ENCODE measurements at regions of chr13 and their contacts with region 1.

Region 1: DNA sequence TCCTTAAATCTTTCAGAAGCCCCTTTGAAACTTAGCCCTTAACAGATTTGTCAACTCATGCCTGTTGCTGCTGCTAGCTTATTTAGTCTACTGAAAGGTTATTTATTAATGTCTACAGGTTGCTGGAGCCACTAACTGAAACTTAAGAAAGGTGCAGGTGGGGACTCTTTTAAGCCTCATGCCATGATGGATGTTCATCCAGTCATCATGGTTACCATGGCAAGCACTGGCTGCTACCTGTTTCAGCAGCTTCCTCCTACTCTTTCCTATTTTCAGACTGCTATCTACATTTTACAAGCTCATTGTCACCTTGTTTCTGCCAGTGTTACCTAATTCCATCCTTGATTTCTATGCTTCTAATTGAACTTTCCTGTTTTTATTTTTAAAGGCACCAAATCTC is 27.1 kb downstream of the DGKH start:
- DNase-seq: no peak
- H3K4me3 Mint-ChIP-seq: no peak overlapping the region
- H3K27ac Mint-ChIP-seq: no peak overlapping the region
- H3K4me1 Mint-ChIP-seq: peaks cover 10% of the 10 kb centered on the region
- H3K27me3 Mint-ChIP-seq: no peaks in the 10 kb centered on the region
- CTCF ChIP-seq: no peak

Region 2: DNA sequence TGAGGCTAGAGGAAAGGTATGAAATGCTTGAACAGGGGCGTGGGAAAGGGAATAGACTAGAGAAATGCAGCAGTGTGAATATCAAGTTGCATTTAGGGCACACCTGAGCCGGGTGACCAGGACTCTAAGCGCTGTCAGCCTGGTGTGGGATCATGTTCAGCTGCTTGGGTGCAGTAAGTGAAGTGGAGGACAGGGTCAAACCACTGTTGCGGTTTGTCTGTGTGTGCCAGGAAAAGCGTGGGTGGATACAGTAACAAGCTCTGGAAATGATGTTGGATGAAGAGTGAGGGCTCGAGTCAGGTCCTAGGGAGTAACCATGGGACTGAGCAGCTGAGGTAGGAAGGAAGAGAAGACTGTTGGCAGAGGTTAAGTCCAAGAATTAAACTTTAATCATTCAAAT is 11.3 kb before region 1 on chr13:
- CTCF ChIA-PET with region 1: interaction called, 4 read pairs
- POLR2A ChIA-PET with region 1: interaction called, 20 read pairs
- intact Hi-C with region 1: no loop called
- DNase-seq: peak; percentile 76
- H3K4me3 Mint-ChIP-seq: no peak overlapping the region
- H3K27ac Mint-ChIP-seq: peak overlapping the region; percentile 2
- H3K4me1 Mint-ChIP-seq: peaks cover 21% of the 10 kb centered on the region
- H3K27me3 Mint-ChIP-seq: no peaks in the 10 kb centered on the region
- CTCF ChIP-seq: no peak

Measured in MCF 10A (cell line).